ENCODE measurements at regions of chr9 and their contacts with region 1.

Region 1: DNA sequence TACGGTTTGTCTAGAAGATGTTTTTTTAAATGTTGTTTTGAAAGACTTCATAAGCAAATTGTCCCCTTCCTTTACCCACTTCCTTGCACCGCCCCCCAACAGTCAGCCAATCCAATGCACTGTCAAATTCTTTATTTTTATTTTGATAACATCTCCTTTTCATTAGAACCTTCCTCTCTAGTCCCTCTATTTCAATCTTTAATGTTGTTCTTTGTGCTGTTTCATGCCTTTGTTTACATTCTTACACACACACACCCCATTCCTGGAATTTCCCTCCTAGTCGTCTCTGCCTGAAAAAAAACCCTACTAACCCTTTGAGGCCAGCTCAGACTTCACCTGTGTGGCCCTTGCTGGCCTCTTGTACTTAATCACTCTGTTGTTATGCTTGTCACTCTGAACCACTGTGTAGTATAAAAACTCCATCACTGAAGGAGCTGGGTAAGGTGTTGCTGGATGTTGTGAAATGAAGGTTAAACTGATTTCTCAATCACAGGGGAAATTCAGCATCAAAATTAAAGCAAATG is 133.4 kb downstream of the UGCG start:
- H3K4me3 Mint-ChIP-seq: no peak overlapping the region
- H3K27ac Mint-ChIP-seq: peak overlapping the region; percentile 22
- H3K4me1 Mint-ChIP-seq: peaks cover 50% of the 10 kb centered on the region
- H3K27me3 Mint-ChIP-seq: peaks cover 1% of the 10 kb centered on the region

Region 2: DNA sequence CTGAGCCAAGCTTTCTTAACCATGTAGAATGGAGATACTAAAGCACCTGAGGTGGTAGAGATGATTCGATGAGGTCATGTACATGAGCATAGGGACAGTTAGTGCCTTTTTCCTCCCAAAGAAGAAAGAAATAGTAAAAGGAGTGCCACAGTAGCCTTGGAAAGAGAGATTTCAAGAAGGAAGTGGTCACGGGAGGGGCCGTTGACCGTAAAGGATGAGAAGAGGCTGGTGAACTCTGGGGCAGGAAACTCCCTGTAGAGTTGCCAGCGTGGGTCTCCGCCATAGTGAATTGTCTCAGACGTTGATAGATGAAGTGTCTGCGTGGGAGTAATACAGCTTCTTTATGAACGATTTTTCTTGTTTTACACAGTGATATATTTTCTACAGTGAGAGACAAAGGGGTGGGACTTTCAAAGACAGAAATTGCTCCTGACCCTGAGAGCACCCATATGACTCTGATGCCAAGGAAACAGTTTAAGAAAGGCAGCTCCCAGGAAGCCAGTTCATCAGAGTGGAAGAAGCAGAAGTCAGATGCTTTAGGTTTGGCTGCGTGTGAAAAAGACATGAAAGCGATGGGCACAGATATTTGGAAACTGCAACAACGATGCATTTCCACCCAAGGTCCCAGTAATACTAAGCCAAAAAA is 92.1 kb before region 1 on chr9:
- intact Hi-C with region 1: no loop called
- H3K4me3 Mint-ChIP-seq: peak overlapping the region; percentile 30
- H3K27ac Mint-ChIP-seq: peak overlapping the region; percentile 65
- H3K4me1 Mint-ChIP-seq: peaks cover 25% of the 10 kb centered on the region
- H3K27me3 Mint-ChIP-seq: no peaks in the 10 kb centered on the region

Region 3: DNA sequence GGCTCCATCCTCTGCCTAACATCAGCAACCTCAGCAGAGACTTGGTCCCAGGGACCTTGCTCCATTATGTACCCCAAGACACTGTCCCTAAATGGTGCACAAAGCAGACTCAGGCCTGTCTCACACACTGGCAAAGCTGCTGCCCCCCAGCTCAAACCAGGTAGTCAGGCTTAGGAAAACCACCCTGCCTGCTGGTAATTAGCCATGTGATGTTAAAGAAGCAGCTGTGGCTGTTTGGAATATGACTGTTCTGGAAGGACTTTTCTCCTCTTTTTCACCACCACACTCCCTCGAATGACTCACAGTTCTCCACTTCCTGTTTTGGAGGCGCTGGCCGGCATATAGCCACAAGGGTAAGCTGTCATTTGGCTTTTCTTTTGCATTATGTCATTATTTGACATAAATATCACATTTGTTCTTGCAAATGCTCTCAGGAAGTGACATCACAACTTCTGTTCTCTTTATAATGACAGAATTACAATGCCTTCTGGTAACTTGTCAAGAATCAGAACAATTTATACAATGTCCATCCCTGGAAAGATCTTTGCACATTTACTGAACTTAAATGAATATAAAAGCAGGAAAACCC is 31.3 kb after region 1 on chr9:
- intact Hi-C with region 1: loop called (anchors 5 kb)
- H3K4me3 Mint-ChIP-seq: no peak overlapping the region
- H3K27ac Mint-ChIP-seq: peak overlapping the region; percentile 82
- H3K4me1 Mint-ChIP-seq: peaks cover 82% of the 10 kb centered on the region
- H3K27me3 Mint-ChIP-seq: no peaks in the 10 kb centered on the region